B cell (primary cell): ENCODE measurements at regions of chr7 and their contacts with region 1.

Region 1: GRCh38 chr7:47669061-47669891 is 87.4 kb upstream of the TNS3 start:
- DNase-seq: peak; percentile 92
- ATAC-seq: peak; percentile 71
- H3K4me3 ChIP-seq: peak overlapping the region in 3 of 5 experiments; percentile 7 to 23 (median 21)
- H3K4me3 Mint-ChIP-seq: peak overlapping the region; percentile 74
- H3K27ac ChIP-seq: peak overlapping the region; percentile 88 to 90
- H3K27ac Mint-ChIP-seq: peak overlapping the region; percentile 98
- H3K4me1 ChIP-seq: peaks cover 50 to 69% of the 10 kb centered on the region in 2 donors
- H3K4me1 Mint-ChIP-seq: peaks cover 57% of the 10 kb centered on the region
- H3K27me3 ChIP-seq: no peaks in the 10 kb centered on the region
- H3K27me3 Mint-ChIP-seq: no peaks in the 10 kb centered on the region
- CTCF ChIP-seq: no peak

Region 2: DNA sequence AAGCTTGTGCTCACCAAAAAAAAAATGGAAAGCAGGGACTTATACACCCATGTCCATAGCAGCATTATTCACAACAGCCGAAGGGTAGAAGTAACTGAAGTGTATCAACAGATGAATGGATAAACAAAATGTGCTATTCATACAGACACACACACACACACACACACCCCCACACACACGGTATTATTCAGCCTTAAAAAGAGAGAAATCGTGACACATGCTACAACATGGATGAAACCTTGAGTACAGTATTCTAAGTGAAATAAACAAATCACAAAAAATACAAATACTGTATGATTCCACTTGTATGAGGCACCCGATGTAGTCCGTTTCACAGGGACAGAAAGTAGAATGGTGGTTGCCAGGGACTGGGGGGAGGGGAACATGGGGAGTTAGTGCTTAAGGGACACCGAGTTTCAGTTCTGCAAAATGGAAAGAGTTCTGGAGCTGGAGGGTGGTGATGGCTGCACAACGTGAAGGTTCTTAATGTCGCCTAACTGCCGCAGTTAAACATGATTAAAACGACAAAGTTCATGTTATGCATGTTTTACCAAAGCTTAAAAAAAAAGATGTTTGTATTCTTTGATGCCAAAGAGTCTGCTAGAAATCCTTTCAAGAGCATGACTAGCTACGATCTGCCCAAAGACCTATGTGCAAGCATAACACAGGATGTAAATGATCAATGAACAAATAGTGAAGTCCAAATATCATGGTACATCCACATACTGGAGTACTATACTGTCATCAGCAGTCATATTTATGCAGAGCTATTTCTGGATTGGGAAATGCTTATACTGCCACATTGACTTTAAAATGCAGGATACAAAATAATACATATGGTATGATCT is 94.6 kb before region 1 on chr7:
- CTCF ChIA-PET with region 1: interaction called, 7 read pairs
- POLR2A ChIA-PET with region 1: interaction called, 8 read pairs
- intact Hi-C with region 1: loop called (anchors 2 kb)
- DNase-seq: peak; percentile 86
- ATAC-seq: peak; percentile 81
- H3K4me3 ChIP-seq: peak overlapping the region in 3 of 5 experiments; percentile 7 to 35 (median 27)
- H3K4me3 Mint-ChIP-seq: peak overlapping the region; percentile 71
- H3K27ac ChIP-seq: no peak overlapping the region
- H3K27ac Mint-ChIP-seq: peak overlapping the region; percentile 83
- H3K4me1 ChIP-seq: peaks cover 78 to 96% of the 10 kb centered on the region in 2 donors
- H3K4me1 Mint-ChIP-seq: peaks cover 92% of the 10 kb centered on the region
- H3K27me3 ChIP-seq: no peaks in the 10 kb centered on the region
- H3K27me3 Mint-ChIP-seq: no peaks in the 10 kb centered on the region
- CTCF ChIP-seq: no peak

Region 3: DNA sequence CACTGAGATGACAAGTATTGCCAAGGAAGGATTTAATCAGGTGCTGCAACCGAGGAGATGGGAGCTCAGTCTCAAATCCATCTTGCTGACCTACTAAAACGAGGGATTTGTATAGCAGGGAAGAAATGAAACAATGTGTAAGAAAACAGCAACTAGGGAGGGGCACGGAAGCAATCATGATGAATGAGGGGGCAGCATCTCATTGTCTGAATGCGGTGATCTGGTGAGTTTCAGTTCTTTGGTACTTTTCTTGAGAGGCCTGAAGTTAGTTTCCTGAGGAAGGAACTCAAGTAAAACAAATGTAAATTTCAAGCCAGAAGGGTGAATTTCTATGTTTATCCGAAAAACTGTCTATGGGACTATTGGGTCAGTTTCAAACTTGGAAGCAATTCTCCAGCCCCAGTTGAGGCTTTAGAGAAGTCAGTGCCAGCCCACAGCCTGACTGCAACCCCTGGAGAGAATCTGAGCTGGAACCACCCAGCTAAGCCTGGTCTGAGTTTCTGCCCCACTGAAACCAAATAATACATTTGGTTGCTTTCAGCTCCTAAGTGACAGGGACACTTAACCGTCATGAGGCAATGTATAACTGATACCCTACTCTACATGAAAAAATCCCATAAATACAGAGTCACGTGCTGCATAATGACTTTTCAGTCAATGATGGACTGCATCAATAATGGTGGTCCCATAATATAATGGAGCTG is 41.5 kb before region 1 on chr7:
- CTCF ChIA-PET with region 1: interaction called, 4 read pairs
- POLR2A ChIA-PET with region 1: interaction called, 9 read pairs
- intact Hi-C with region 1: loop called (anchors 5 kb)
- DNase-seq: peak; percentile 65
- ATAC-seq: peak; percentile 65
- H3K4me3 ChIP-seq: peak overlapping the region in 2 of 5 experiments; percentile 3 to 11
- H3K4me3 Mint-ChIP-seq: peak overlapping the region; percentile 81
- H3K27ac ChIP-seq: peak overlapping the region; percentile 45 to 52
- H3K27ac Mint-ChIP-seq: peak overlapping the region; percentile 91
- H3K4me1 ChIP-seq: peaks cover 29 to 54% of the 10 kb centered on the region in 2 donors
- H3K4me1 Mint-ChIP-seq: peaks cover 63% of the 10 kb centered on the region
- H3K27me3 ChIP-seq: no peaks in the 10 kb centered on the region
- H3K27me3 Mint-ChIP-seq: no peaks in the 10 kb centered on the region
- CTCF ChIP-seq: no peak

Region 4: DNA sequence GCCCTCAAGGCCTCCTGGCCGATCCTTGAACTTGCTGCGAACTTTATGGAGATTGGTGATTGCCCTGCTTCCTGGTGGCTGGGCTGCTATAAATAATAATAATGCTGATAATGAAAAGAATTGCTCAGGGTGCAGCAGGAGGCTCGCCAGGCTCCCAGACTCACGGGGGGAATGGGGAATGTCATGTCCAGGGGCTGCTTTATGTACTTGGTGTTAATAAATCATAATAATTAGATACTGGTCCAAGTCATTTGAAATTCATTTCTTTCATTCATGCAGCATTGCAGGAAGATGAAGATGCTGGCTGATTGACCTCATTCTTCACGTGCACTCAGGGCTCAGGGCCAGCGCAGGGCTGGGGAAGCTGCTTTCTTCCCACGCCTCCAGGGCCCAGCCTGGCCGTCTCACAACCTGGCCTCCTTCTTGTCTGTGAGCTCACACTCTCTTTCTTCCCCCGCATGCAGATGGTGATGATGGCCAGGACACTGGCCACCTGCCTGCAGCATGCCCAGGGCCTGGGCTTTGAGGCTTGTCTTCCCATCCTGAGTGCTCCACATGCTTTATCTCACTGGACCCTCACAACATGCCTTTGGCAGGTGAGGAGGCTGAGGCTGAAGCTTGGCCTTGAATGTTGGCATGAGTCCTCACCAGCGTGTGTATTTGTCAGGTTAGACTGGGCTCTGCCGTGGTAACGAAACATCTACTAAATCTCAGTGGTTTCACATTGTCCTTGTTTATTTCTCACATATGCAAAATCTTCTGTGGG is 51.0 kb after region 1 on chr7:
- CTCF ChIA-PET with region 1: interaction called, 9 read pairs
- POLR2A ChIA-PET with region 1: interaction called, 14 read pairs
- intact Hi-C with region 1: loop called (anchors 1 kb)
- DNase-seq: peak; percentile 45
- ATAC-seq: peak; percentile 12
- H3K4me3 ChIP-seq: no peak overlapping the region
- H3K4me3 Mint-ChIP-seq: peak overlapping the region; percentile 64
- H3K27ac ChIP-seq: peak overlapping the region in 1 of 2 donors; percentile 28
- H3K27ac Mint-ChIP-seq: peak overlapping the region; percentile 87
- H3K4me1 ChIP-seq: peaks cover 57 to 63% of the 10 kb centered on the region in 2 donors
- H3K4me1 Mint-ChIP-seq: peaks cover 71% of the 10 kb centered on the region
- H3K27me3 ChIP-seq: no peaks in the 10 kb centered on the region
- H3K27me3 Mint-ChIP-seq: no peaks in the 10 kb centered on the region
- CTCF ChIP-seq: no peak

Region 5: DNA sequence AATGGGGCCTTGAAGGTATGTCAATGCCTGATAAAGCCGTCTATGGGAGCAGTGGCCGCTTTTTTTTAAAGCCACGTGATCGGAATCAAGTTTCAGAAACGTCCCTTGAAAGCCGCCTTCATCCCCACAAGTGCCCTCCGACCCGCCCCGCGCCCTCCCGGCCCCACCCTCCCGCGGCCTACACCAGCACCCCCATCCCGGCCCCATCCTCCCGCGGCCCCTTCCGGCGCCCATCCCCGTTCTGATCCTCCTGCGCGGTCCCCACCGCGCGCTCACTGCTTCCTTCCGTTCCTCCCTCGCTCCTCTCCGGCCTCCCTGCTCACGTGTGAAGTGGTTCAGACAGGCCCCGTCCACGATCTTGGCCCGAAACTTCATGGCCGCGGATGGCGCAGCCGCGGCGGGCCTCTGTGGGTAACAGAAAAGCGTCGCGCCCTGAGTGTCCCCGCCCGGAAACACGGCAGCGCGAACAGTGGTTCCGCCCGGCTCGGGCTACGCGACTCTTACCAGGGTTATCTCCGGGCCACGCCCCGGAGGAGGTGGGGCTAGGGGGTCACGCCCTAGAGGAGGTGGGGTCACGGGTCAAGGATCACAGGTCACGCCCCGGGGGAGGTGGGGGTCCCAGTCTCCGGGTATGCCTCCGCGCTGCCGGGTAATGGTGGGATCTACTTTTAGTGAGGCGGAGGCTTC is 310.0 kb after region 1 on chr7 and contains the start of gene HUS1:
- CTCF ChIA-PET with region 1: no interaction called
- POLR2A ChIA-PET with region 1: no interaction called
- intact Hi-C with region 1: loop called (anchors 5 kb)
- DNase-seq: peak; percentile 94
- ATAC-seq: peak; percentile 98
- H3K4me3 ChIP-seq: peak within 1 kb of the TSS; percentile 67 to 91 (median 71)
- H3K4me3 Mint-ChIP-seq: peak within 1 kb of the TSS; percentile 92
- H3K27ac ChIP-seq: peak within 1 kb of the TSS; percentile 91 to 93
- H3K27ac Mint-ChIP-seq: peak within 1 kb of the TSS; percentile 98
- H3K4me1 ChIP-seq: peaks cover 8 to 13% of the 10 kb centered on the region in 2 donors
- H3K4me1 Mint-ChIP-seq: peaks cover 22% of the 10 kb centered on the region
- H3K27me3 ChIP-seq: no peaks in the 10 kb centered on the region
- H3K27me3 Mint-ChIP-seq: no peaks in the 10 kb centered on the region
- CTCF ChIP-seq: no peak
- total RNA-seq, gene HUS1: 61.6 and 70.8 TPM in 2 replicates